ENCODE measurements at regions of chr12 and their contacts with region 1.

Region 1: GRCh38 chr12:30286345-30286926 is 409.2 kb downstream of the IPO8 start:
- DNase-seq: no peak

Region 2: DNA sequence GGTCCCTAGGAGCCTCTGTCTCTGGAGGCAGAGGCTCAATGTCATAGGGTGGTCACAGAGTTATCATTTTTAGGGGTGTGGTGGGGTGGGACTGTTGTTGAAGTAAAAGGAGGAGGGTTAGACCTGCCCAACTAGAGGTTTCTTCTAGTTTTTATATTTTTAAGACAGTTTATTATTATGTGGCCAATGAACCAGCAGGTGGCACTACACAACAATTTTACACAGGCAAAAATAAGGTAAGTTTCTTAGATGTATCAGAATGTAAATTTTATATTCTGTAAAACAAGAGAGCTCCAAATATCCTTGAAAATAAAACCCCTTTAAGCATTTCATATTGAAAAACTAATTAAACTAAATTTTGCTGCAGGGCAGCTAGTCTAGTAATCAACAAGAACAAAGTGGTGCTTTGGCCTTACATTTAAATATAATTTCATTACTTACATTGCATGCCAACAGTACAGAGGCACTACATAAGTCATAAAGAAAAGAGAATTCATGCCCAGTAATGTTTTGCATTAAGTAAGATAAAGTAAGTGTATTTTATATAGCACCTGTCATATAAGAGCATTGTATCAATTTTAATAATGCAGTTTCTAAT is 766.8 kb before region 1 on chr12:
- intact Hi-C with region 1: loop called (anchors 10 kb)
- DNase-seq: no peak

Measured in cardiac septum (tissue), 1 donor.